Activated naive CD8-positive, alpha-beta T cell treated with anti-CD3 and anti-CD28 coated beads, Interleukin-2, amount 10 ng/mL, durations not matched to agents 7 days and 5 days (primary cell): ENCODE measurements at regions of chr5 and their contacts with region 1.

Region 1: GRCh38 chr5:140710899-140711552 is 10.8 kb downstream of the ZMAT2 start:
- DNase-seq: peak; percentile 75
- ATAC-seq: peak; percentile 91
- H3K4me3 Mint-ChIP-seq: peak overlapping the region; percentile 89
- H3K27ac Mint-ChIP-seq: peak overlapping the region; percentile 95
- H3K4me1 Mint-ChIP-seq: peaks cover 16% of the 10 kb centered on the region
- H3K27me3 Mint-ChIP-seq: peaks cover 6% of the 10 kb centered on the region

Region 2: DNA sequence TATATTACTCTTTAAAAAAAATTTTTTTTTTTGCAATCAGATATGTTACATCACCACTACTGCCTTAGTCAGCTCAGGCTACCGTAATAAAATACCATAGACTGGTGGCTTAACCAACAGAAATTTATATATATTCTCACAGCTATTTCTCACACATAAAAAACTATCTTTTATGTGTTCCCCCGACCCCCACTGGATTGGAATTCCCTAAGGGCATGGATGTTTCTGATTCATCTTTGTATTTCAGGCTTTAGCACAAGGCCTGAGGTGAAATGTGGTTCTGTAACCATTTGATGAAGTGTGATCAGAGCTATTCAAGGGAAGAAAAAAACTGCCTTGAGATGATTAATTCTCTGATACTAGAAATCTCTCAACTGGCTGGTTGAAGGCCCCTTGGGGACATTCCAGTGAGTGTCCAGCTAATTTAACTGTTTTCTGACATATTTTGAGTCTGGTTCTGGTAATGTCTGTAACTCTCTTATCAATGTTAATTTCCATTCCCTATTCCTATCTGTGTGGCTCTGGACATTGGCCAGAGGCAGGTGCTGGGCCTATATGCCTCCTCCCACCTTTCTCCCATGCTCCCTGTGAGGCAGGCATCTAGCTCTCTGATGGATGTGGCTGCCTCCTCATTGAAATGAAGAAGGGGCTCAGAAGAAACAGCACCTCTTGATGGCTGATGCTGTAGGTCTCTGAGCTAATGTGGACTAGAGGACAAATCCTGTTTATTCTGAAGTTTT is 80.6 kb before region 1 on chr5:
- POLR2A ChIA-PET with region 1: no interaction called
- DNase-seq: no peak
- ATAC-seq: no peak
- H3K4me3 Mint-ChIP-seq: no peak overlapping the region
- H3K27ac Mint-ChIP-seq: no peak overlapping the region
- H3K4me1 Mint-ChIP-seq: peaks cover 22% of the 10 kb centered on the region
- H3K27me3 Mint-ChIP-seq: peaks cover 24% of the 10 kb centered on the region

Region 3: GRCh38 chr5:140700177-140701144 is 10.6 kb before region 1 on chr5 and contains the start of gene ZMAT2:
- POLR2A ChIA-PET with region 1: interaction called, 20 read pairs
- DNase-seq: peak; percentile 82
- ATAC-seq: peak; percentile 99
- H3K4me3 Mint-ChIP-seq: peak within 1 kb of the TSS; percentile 97
- H3K27ac Mint-ChIP-seq: peak within 1 kb of the TSS; percentile 95
- H3K4me1 Mint-ChIP-seq: peaks cover 15% of the 10 kb centered on the region
- H3K27me3 Mint-ChIP-seq: no peaks in the 10 kb centered on the region
- total RNA-seq, gene ZMAT2: 54.7 to 57.8 TPM

Region 4: DNA sequence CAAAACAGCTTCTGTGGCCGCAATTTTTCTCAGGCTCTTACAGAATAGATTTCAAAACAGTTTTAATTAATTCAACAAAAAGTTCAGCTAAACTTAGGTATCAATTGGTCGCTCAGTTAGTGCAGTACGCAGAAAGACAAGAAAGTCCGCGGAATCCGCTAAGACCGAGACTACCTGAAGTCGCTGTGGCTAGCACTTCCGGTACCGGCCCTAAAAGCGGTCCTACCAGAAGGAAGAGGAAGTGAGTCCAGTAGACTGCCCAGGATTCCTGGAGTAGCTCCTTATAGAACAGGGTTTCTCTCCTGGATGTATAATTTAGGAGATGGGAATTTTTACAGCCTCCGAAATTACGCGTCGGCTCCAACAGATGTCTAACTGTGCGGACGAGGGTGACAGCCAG is 366.8 kb after region 1 on chr5:
- POLR2A ChIA-PET with region 1: no interaction called
- DNase-seq: no peak
- ATAC-seq: no peak
- H3K4me3 Mint-ChIP-seq: no peak overlapping the region
- H3K27ac Mint-ChIP-seq: no peak overlapping the region
- H3K4me1 Mint-ChIP-seq: no peaks in the 10 kb centered on the region
- H3K27me3 Mint-ChIP-seq: peaks cover 4% of the 10 kb centered on the region